Mammary epithelial cell (primary cell): ENCODE measurements at regions of chr14 and their contacts with region 1.

Region 1: DNA sequence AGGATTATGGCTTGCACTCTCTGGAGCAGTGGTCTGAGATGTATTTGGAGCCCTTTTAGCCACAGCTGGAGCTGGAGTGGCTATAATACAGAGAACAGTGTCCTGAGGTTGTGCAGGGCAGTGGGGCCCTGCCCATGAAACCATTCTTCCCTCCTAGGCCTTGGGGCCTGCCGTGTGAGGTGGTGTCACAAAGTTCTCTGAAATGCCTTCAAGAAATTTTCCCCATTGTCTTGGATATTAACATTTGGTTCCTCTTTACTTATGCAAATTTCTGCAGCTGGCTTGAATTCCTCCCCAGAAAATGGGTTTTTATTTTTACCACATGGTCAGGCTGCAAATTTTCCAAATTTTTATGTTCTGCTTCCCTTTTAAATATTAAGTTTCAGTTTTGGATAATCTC is 79.3 kb downstream of the UNC79 start:
- DNase-seq: no peak
- H3K4me3 ChIP-seq: no peak overlapping the region
- H3K27ac ChIP-seq: no peak overlapping the region
- H3K4me1 ChIP-seq: no peaks in the 10 kb centered on the region
- H3K27me3 ChIP-seq: no peaks in the 10 kb centered on the region
- CTCF ChIP-seq: no peak

Region 2: GRCh38 chr14:93281937-93282336 is 228.1 kb before region 1 on chr14:
- CTCF ChIA-PET with region 1: no interaction called
- dilution Hi-C with region 1: no loop called
- in situ Hi-C with region 1: no loop called
- intact Hi-C with region 1: no loop called
- DNase-seq: no peak
- H3K4me3 ChIP-seq: no peak overlapping the region
- H3K27ac ChIP-seq: no peak overlapping the region
- H3K4me1 ChIP-seq: no peaks in the 10 kb centered on the region
- H3K27me3 ChIP-seq: no peaks in the 10 kb centered on the region
- CTCF ChIP-seq: no peak

Region 3: DNA sequence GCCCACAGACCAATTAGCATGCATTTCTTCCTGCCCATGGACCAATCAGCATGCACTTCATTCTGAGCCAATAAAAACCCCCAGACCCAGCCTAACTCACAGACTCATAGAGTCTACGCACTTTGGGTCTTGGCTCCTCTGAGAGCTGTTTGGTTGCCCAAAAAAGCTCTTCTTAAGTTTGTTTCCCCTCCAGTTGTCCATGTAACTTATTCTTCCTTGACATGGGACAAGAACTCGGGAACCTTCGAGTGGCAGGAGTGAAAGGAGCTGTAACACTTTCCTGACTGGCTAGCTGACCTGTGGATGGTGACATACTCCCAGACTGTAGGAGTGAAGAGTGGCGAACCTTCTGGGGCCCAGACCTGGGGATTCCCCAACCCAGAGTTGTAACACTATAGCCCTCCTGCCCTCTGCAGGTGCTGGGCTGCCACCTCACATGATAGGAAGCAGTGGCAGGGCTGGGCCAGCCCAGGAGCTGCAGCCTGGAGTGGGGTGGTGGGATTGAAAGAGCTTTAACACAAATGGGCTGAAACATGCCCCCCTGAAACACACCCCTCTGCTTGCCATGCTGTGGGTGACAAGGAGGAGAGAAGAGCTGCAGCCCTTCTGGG is 172.8 kb before region 1 on chr14:
- CTCF ChIA-PET with region 1: no interaction called
- dilution Hi-C with region 1: no loop called
- in situ Hi-C with region 1: no loop called
- intact Hi-C with region 1: no loop called
- DNase-seq: no peak
- H3K4me3 ChIP-seq: no peak overlapping the region
- H3K27ac ChIP-seq: no peak overlapping the region
- H3K4me1 ChIP-seq: no peaks in the 10 kb centered on the region
- H3K27me3 ChIP-seq: no peaks in the 10 kb centered on the region
- CTCF ChIP-seq: no peak

Region 4: DNA sequence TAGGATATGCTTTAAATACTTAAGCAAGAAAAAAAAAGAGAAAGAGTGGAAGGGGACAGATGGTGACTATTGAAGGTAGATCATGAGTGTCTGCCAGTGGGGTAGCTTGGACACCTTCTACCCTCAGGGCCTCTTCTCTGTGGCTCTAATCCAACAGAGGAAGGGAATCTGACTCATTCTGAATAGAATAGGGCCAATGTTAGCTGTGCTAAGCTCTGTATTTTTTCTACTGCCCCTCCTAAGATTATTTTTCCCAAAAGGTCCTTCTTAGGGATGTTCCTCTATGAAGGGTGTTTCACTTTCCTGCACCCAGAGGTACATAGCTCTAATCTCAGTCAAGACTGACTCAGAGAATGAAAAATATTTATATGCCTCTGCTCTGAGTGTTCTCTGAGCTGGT is 53.7 kb before region 1 on chr14:
- CTCF ChIA-PET with region 1: no interaction called
- dilution Hi-C with region 1: loop called (anchors 10 kb)
- in situ Hi-C with region 1: no loop called
- intact Hi-C with region 1: no loop called
- DNase-seq: peak; percentile 66
- H3K4me3 ChIP-seq: no peak overlapping the region
- H3K27ac ChIP-seq: no peak overlapping the region
- H3K4me1 ChIP-seq: peaks cover 8% of the 10 kb centered on the region
- H3K27me3 ChIP-seq: no peaks in the 10 kb centered on the region
- CTCF ChIP-seq: no peak